OCI-LY7 (cell line): ENCODE measurements at regions of chr6 and their contacts with region 1.

Region 1: GRCh38 chr6:110873981-110874879 is at the start of gene AMD1:
- DNase-seq: peak; percentile 98
- H3K4me3 ChIP-seq: peak within 1 kb of the TSS; percentile 94
- H3K27ac ChIP-seq: peak within 1 kb of the TSS; percentile 73
- H3K4me1 ChIP-seq: peaks cover 23% of the 10 kb centered on the region
- CTCF ChIP-seq: no peak
- total RNA-seq, gene AMD1: 64.2 and 74.3 TPM in 2 replicates

Region 2: GRCh38 chr6:110682460-110682853 is 191.8 kb before region 1 on chr6:
- CTCF ChIA-PET with region 1: interaction called, 6 read pairs
- POLR2A ChIA-PET with region 1: interaction called, 16 read pairs
- intact Hi-C with region 1: loop called (anchors 1 kb)
- DNase-seq: peak; percentile 88
- H3K4me3 ChIP-seq: no peak overlapping the region
- H3K27ac ChIP-seq: no peak overlapping the region
- H3K4me1 ChIP-seq: peaks cover 12% of the 10 kb centered on the region
- CTCF ChIP-seq: peak; percentile 95

Region 3: GRCh38 chr6:110815217-110816109 is 58.8 kb before region 1 on chr6 and contains the start of gene CDK19:
- CTCF ChIA-PET with region 1: no interaction called
- POLR2A ChIA-PET with region 1: interaction called, 69 read pairs
- intact Hi-C with region 1: loop called (anchors 1 kb)
- DNase-seq: peak; percentile 99
- H3K4me3 ChIP-seq: peak within 1 kb of the TSS; percentile 78
- H3K27ac ChIP-seq: peak within 1 kb of the TSS; percentile 87
- H3K4me1 ChIP-seq: peaks cover 41% of the 10 kb centered on the region
- CTCF ChIP-seq: no peak
- total RNA-seq, gene CDK19: 15.4 and 16.3 TPM in 2 replicates

Region 4: GRCh38 chr6:110859335-110859792 is 14.9 kb before region 1 on chr6:
- CTCF ChIA-PET with region 1: no interaction called
- POLR2A ChIA-PET with region 1: interaction called, 14 read pairs
- intact Hi-C with region 1: no loop called
- DNase-seq: no peak
- H3K4me3 ChIP-seq: no peak overlapping the region
- H3K27ac ChIP-seq: no peak overlapping the region
- H3K4me1 ChIP-seq: no peaks in the 10 kb centered on the region
- CTCF ChIP-seq: no peak

Region 5: DNA sequence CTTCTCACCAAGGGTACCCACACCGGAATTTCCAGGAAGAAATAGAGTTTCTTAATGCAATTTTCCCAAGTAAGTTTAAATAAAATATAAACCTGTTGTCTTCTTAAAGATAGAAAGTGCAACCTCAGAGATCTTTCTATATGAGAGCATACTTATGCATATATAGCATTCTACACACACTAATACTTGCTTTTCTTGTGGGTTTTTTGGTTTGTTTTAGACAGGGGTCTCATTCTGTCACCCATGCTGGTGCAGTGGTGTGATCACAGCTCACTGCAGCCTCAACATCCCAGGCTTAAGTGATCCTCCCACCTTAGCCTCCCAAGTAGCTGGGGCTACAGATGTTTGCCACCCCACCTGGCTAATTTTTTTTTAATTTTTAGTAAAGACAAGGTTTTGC is 16.1 kb after region 1 on chr6:
- CTCF ChIA-PET with region 1: no interaction called
- POLR2A ChIA-PET with region 1: interaction called, 21 read pairs
- intact Hi-C with region 1: no loop called
- DNase-seq: no peak
- H3K4me3 ChIP-seq: no peak overlapping the region
- H3K27ac ChIP-seq: no peak overlapping the region
- H3K4me1 ChIP-seq: peaks cover 16% of the 10 kb centered on the region
- CTCF ChIP-seq: no peak

Region 6: GRCh38 chr6:110958329-110959192 is 84.3 kb after region 1 on chr6 and contains the start of gene GTF3C6:
- CTCF ChIA-PET with region 1: no interaction called
- POLR2A ChIA-PET with region 1: interaction called, 12 read pairs
- intact Hi-C with region 1: loop called (anchors 2 kb)
- DNase-seq: peak; percentile 96
- H3K4me3 ChIP-seq: peak within 1 kb of the TSS; percentile 78
- H3K27ac ChIP-seq: peak within 1 kb of the TSS; percentile 49
- H3K4me1 ChIP-seq: peaks cover 17% of the 10 kb centered on the region
- CTCF ChIP-seq: no peak
- total RNA-seq, gene GTF3C6: 29.7 and 56.8 TPM in 2 replicates

Region 7: GRCh38 chr6:110981202-110981600 is 107.0 kb after region 1 on chr6:
- CTCF ChIA-PET with region 1: no interaction called
- POLR2A ChIA-PET with region 1: interaction called, 15 read pairs
- intact Hi-C with region 1: loop called (anchors 5 kb)
- DNase-seq: no peak
- H3K4me3 ChIP-seq: peak overlapping the region; percentile 92
- H3K27ac ChIP-seq: peak overlapping the region; percentile 48
- H3K4me1 ChIP-seq: peaks cover 30% of the 10 kb centered on the region
- CTCF ChIP-seq: no peak

Region 8: GRCh38 chr6:111973927-111974639 is 1099.9 kb after region 1 on chr6:
- CTCF ChIA-PET with region 1: no interaction called
- POLR2A ChIA-PET with region 1: no interaction called
- intact Hi-C with region 1: no loop called
- DNase-seq: no peak
- H3K4me3 ChIP-seq: no peak overlapping the region
- H3K27ac ChIP-seq: no peak overlapping the region
- H3K4me1 ChIP-seq: no peaks in the 10 kb centered on the region
- CTCF ChIP-seq: no peak